ENCODE measurements at regions of chrX and their contacts with region 1.

Region 1: DNA sequence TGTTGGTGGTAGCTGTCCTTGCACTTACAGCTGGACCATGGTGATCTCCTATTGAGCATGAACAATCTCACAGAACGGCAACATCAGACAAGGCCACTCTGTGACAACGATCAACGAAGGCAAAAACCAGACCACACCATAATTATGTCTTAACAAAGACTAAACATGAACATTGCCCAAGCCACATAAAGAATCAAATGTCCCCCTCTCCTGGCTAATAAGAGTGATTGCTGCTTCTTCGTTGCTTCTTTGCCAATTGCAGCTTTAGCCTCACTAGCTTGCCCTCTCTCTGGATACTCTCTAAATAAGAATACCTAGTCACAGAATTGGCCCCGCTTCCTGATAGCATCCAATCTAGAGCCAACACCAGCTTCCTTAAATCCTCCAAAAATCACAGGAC is 41.5 kb upstream of the PGRMC1 start:
- DNase-seq: no peak
- ATAC-seq: 0 out of 3 replicates have a peak, but pooled peaks have one; percentile 25
- H3K4me3 ChIP-seq: no peak overlapping the region
- H3K27ac ChIP-seq: no peak overlapping the region
- H3K4me1 ChIP-seq: no peaks in the 10 kb centered on the region
- H3K27me3 ChIP-seq: no peaks in the 10 kb centered on the region
- CTCF ChIP-seq: peak; percentile 32
- EP300 ChIP-seq: no peak
- POLR2A ChIP-seq: no peak
- RAD21 ChIP-seq: no peak

Region 2: DNA sequence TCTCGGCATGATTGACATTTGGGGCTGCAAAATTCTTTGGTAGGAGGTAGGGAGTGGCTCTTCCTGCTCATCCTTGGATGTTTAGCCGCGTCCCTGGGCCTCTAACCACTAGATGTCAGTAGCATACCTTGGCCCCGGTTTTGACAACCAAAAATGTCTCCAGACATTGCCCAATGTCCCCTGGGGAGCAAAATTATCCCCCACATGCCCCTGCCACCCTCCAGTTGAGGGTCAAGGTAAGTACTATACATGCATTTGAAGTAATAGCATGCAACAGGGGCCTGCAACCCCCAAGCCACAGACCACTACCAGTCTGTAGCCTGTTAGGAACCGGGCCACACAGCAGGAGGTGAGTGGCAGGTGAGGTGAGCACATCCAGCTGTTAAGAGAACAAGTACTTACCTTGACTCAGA is 49.4 kb before region 1 on chrX:
- CTCF ChIA-PET with region 1: no interaction called
- POLR2A ChIA-PET with region 1: no interaction called
- in situ Hi-C with region 1: no loop called
- intact Hi-C with region 1: loop called (anchors 10 kb)
- DNase-seq: no peak
- ATAC-seq: no peak
- H3K4me3 ChIP-seq: no peak overlapping the region
- H3K27ac ChIP-seq: no peak overlapping the region
- H3K4me1 ChIP-seq: peaks cover 10% of the 10 kb centered on the region; the same call in 1 of the 2 replicates
- H3K27me3 ChIP-seq: no peaks in the 10 kb centered on the region
- CTCF ChIP-seq: peak; percentile 61
- EP300 ChIP-seq: no peak
- POLR2A ChIP-seq: no peak
- RAD21 ChIP-seq: no peak

Region 3: DNA sequence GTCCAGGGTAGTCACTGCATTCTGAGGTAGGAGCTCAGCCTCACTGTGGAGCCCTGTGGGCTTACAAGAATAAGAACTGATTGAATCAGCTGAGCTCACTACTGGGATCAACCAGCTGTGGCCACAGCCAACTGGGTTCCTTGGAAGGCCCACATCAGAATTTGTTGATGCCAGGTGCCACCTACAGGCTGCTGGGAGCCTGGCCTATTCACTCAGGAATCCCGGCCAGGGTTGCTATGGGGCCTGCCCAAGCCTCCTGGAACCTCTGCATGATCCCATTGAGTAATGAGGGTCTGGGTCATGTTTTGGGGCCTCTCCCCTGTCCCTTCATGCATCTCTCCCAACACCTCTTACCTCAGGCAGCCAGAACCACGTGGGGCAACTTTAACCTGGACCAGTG is 13.1 kb before region 1 on chrX:
- CTCF ChIA-PET with region 1: no interaction called
- POLR2A ChIA-PET with region 1: no interaction called
- in situ Hi-C with region 1: no loop called
- intact Hi-C with region 1: no loop called
- DNase-seq: peak; percentile 12
- ATAC-seq: peak; percentile 85
- H3K4me3 ChIP-seq: no peak overlapping the region
- H3K27ac ChIP-seq: no peak overlapping the region
- H3K4me1 ChIP-seq: peaks cover 2% of the 10 kb centered on the region; the same call in 1 of the 2 replicates
- H3K27me3 ChIP-seq: no peaks in the 10 kb centered on the region
- CTCF ChIP-seq: peak; percentile 32
- EP300 ChIP-seq: no peak
- POLR2A ChIP-seq: no peak
- RAD21 ChIP-seq: no peak

Region 4: DNA sequence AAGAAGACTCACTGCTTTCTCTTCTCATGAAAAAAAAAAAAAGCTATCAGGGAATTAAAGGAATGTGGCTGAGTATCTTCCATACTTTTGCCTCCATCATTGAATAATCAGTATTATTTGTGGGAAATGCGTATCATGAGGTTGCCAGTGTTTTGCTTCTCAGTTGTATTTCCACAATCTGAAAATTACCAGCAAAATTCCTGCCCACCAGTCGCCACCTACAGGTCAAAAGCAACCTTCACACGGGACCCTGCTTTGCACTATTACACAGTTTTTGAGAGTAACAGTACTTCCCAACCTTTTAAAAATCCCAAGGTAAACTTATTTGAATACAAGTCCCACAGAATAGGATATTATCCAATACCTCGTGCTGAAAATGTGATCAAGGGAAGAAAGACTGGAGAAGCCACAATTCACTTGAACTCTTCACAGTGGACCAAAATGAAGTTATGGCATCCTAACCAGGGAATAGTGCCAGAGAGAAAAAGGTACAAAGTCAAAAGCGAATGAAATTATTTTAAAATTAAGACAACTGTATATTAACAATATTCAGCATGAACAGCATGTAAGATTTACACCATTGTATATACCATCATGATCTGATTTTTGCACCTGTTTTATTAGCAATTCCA is 71.9 kb after region 1 on chrX:
- CTCF ChIA-PET with region 1: no interaction called
- POLR2A ChIA-PET with region 1: no interaction called
- in situ Hi-C with region 1: no loop called
- intact Hi-C with region 1: no loop called
- DNase-seq: peak; percentile 0
- ATAC-seq: peak; percentile 46; the same call in 1 of the 3 replicates
- H3K4me3 ChIP-seq: no peak overlapping the region
- H3K27ac ChIP-seq: no peak overlapping the region
- H3K4me1 ChIP-seq: no peaks in the 10 kb centered on the region
- H3K27me3 ChIP-seq: no peaks in the 10 kb centered on the region
- CTCF ChIP-seq: peak; percentile 58
- EP300 ChIP-seq: no peak
- POLR2A ChIP-seq: no peak
- RAD21 ChIP-seq: no peak

Measured in HepG2 (cell line).